Psoas muscle (tissue), 8 donors: ENCODE measurements at regions of chr17 and their contacts with region 1.

Region 1: DNA sequence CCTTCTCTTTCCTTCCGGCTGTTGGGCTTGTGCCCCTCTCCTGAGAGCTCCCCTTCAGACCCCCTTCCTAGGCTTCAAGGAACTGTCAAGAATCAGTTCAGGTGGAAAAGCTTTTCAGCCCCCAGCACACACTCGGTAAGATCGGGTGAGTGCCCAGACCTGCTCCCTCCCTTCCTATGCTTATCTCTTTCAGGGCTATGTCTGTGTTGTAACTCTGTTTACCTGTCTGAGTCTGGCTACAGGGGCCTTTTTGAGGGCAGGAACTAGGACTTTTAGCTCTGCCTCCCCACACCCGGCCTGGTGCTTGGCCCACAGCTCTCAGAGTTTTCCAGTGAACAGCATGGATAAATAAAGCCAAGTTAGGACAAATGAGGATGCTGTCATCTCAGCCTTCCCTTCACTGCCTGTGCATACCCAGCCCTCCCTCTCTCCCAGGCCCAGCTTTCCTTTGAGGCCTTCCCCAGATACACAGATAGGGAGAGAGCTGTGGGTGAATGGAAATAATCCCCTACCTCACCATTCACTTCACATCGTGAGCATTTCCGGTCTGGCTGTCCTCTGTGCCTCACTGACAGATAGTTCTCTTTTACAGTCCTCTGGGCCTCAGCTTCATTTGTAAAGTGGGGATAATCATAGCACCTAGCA is 5.7 kb upstream of the MRPS23 start:
- DNase-seq: no peak
- ATAC-seq: no peak
- H3K4me3 ChIP-seq: no peak overlapping the region
- H3K27ac ChIP-seq: peak overlapping the region; percentile 93
- H3K4me1 ChIP-seq: peaks cover 63% of the 10 kb centered on the region
- H3K27me3 ChIP-seq: no peaks in the 10 kb centered on the region
- CTCF ChIP-seq: no peak

Region 2: GRCh38 chr17:57892146-57892828 is 36.8 kb after region 1 on chr17:
- intact Hi-C with region 1: loop called in 1 of 2 experiments (anchors 5 kb)
- DNase-seq: peak; percentile 90 to 94
- ATAC-seq: peak; percentile 50 to 59 (median 52)
- H3K4me3 ChIP-seq: peak overlapping the region; percentile 58
- H3K27ac ChIP-seq: peak overlapping the region; percentile 97
- H3K4me1 ChIP-seq: peaks cover 83% of the 10 kb centered on the region
- H3K27me3 ChIP-seq: no peaks in the 10 kb centered on the region
- CTCF ChIP-seq: peak; percentile 96

Region 3: GRCh38 chr17:57939797-57940196 is 84.3 kb after region 1 on chr17:
- intact Hi-C with region 1: loop called in 1 of 2 experiments (anchors 5 kb)
- DNase-seq: peak in 1 of 2 donors; percentile 66
- ATAC-seq: peak; percentile 15 to 54 (median 26)
- H3K4me3 ChIP-seq: no peak overlapping the region
- H3K27ac ChIP-seq: peak overlapping the region; percentile 99
- H3K4me1 ChIP-seq: peaks cover 88% of the 10 kb centered on the region
- H3K27me3 ChIP-seq: no peaks in the 10 kb centered on the region
- CTCF ChIP-seq: no peak

Region 4: DNA sequence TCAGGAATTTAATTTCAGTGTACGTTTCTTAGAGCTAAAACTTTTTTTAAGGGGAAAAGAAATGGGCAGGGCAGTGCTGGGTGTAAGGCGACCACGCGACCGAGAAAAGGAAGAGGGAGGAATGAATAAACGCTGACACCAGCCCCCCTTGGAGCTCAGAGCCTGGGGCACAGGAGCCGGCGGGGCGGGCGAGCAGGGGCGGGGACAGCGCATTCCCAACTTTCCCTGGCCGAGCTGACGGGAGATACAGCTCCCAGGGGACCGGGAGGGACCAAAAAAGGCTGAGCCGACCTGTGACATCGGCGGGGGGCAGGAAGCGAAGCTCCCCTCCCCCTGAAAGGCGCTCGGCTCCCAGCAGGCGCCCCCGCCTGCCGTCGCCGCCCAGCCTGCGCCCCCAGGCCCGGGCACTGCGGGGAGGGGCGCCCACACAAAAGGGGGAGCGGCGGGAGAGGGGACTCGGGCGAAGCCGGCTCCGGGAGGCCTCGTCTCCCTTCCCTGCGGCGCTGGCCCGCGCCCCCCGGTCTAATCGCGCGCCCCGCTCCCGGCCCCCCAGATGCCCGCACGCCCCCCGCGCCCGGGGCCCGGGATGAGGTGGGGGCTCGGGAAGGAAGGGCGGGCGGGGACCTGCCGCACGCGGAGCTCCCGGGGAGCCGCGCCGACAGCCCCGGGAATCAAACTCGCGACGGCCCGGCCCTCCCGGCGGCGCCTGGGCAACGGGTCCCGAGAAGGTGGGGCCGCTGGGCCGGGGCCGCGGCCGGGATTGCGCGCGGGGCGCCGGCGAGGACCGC is 99.1 kb after region 1 on chr17:
- intact Hi-C with region 1: loop called in 1 of 2 experiments (anchors 5 kb)
- DNase-seq: peak; percentile 85 to 90
- ATAC-seq: peak; percentile 48 to 63 (median 52)
- H3K4me3 ChIP-seq: peak overlapping the region; percentile 96
- H3K27ac ChIP-seq: peak overlapping the region; percentile 99
- H3K4me1 ChIP-seq: peaks cover 60% of the 10 kb centered on the region
- H3K27me3 ChIP-seq: no peaks in the 10 kb centered on the region
- CTCF ChIP-seq: no peak

Region 5: DNA sequence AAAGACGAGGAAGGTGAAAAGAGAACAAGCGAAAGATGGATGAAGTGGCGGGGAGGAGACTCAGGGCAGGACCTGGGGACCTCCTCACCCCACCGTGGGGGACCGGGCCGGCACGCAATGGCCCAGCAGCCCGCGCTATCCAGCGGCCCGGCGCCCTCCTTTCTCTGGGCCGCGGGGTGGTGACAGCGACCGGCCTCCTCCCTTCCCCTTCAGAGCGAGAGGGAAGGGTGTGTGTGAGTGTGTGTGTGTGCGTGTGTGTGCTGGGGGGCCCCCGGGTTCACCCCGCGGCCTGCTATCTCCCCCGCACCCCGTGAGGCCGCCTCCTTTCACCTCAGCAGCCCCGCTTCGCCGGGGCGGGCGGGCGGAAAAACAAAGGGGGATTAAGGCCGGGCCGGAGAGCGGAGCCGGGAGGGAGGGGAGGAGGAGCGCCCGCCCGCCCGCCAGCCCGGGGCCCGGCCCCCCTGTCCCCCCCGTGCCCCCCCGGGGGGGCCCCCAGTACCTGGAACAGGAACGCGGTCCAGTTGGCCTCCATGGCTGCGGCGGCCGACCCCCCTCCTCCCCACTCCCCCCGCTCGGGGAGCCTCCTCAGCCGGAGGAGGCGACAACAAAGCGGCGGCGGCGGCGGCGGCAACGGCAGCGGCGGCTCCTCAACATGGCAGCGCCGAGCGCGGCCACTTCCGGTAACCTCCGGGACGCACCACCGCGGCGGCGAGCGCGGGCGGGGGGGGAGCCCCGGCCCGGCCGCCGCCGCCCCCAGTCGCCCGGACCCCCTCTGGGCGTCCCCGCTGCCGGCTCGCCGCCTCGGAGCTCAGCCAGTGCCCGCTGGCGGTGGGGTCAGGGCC is 132.3 kb after region 1 on chr17 and contains the start of gene VEZF1:
- intact Hi-C with region 1: loop called in 1 of 2 experiments (anchors 2 kb)
- DNase-seq: peak; percentile 85 to 92
- ATAC-seq: peak; percentile 63 to 72 (median 67)
- H3K4me3 ChIP-seq: peak within 1 kb of the TSS; percentile 86
- H3K27ac ChIP-seq: peak within 1 kb of the TSS; percentile 94
- H3K4me1 ChIP-seq: peaks cover 78% of the 10 kb centered on the region
- H3K27me3 ChIP-seq: no peaks in the 10 kb centered on the region
- CTCF ChIP-seq: no peak
- total RNA-seq, gene VEZF1: 45.7 to 92.5 (median 70.7) TPM

Region 6: GRCh38 chr17:57995076-57995956 is 139.8 kb after region 1 on chr17:
- intact Hi-C with region 1: loop called (anchors 2 kb)
- DNase-seq: peak; percentile 61 to 87
- ATAC-seq: peak; percentile 90 to 94 (median 92)
- H3K4me3 ChIP-seq: no peak overlapping the region
- H3K27ac ChIP-seq: peak overlapping the region; percentile 94
- H3K4me1 ChIP-seq: peaks cover 65% of the 10 kb centered on the region
- H3K27me3 ChIP-seq: no peaks in the 10 kb centered on the region
- CTCF ChIP-seq: peak; percentile 71

Region 7: DNA sequence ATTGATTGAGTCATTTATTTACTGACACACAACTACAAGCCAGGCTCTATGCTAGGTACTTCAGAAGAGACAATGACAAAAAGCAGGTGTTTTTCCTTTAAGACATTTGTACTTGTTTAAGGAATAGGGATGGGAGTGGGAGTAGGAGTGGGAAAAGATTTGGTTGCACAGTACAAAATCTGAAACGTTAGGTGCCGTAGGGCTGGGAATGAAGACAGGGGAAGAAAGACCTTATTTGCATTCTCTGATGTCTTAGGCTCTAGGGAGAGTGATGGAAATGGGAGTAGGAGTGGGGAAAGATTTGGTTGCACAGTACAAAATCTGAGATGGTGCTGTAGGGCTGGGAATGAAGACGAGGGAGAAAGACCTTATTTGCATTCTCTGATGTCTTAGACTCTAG is 264.0 kb after region 1 on chr17:
- intact Hi-C with region 1: loop called (anchors 5 to 10 kb)
- DNase-seq: no peak
- ATAC-seq: no peak
- H3K4me3 ChIP-seq: no peak overlapping the region
- H3K27ac ChIP-seq: no peak overlapping the region
- H3K4me1 ChIP-seq: no peaks in the 10 kb centered on the region
- H3K27me3 ChIP-seq: peaks cover 0 to 4% (median 0%) of the 10 kb centered on the region in 3 donors
- CTCF ChIP-seq: no peak